OCI-LY7 (cell line): ENCODE measurements at regions of chr3 and their contacts with region 1.

Region 1: DNA sequence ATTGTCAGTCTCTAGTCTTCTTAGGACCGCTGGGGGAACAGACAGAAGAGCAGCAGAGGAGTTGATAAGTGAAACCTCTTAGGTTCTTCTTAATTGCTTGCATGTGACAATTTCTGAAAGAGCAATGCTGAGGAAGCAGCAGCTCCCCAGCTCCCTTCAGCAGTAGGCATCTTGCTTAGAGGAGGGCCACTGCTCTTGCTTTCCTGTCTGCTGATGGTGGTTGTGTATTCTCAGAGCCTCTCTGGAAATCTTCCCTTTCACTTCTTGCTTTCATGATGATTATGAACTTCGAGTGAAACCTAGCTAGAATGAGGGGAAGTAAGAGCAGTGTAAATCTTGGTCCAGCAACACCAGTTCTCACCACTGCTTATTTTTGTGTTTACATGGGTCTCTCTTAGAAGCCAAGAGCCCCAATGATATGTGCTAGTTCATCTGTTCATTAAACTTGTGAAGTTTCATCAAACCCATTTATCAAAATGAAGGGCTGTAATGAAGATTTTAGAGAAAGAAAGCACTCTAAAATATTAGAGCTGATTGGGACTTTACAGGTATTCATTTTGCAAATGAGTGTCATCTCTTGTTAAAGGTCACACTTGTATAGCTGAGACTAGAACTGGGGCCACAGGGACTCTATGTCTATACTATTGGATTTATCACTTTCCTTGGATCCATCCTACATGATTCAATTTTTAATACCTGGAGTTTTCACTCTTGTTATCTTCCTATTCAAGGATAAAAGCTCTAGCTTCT is 246.7 kb downstream of the LPP start:
- DNase-seq: peak; percentile 78
- H3K4me3 ChIP-seq: no peak overlapping the region
- H3K27ac ChIP-seq: peak overlapping the region; percentile 48
- H3K4me1 ChIP-seq: peaks cover 46% of the 10 kb centered on the region
- CTCF ChIP-seq: no peak

Region 2: GRCh38 chr3:188389711-188390342 is 10.8 kb before region 1 on chr3:
- CTCF ChIA-PET with region 1: no interaction called
- POLR2A ChIA-PET with region 1: interaction called, 21 read pairs
- intact Hi-C with region 1: no loop called
- DNase-seq: peak; percentile 92
- H3K4me3 ChIP-seq: peak overlapping the region; percentile 53
- H3K27ac ChIP-seq: peak overlapping the region; percentile 89
- H3K4me1 ChIP-seq: peaks cover 50% of the 10 kb centered on the region
- CTCF ChIP-seq: no peak

Region 3: GRCh38 chr3:188421836-188422540 is 21.3 kb after region 1 on chr3:
- CTCF ChIA-PET with region 1: interaction called, 3 read pairs
- POLR2A ChIA-PET with region 1: interaction called, 14 read pairs
- intact Hi-C with region 1: loop called (anchors 2 kb)
- DNase-seq: peak; percentile 94
- H3K4me3 ChIP-seq: peak overlapping the region; percentile 53
- H3K27ac ChIP-seq: peak overlapping the region; percentile 88
- H3K4me1 ChIP-seq: peaks cover 52% of the 10 kb centered on the region
- CTCF ChIP-seq: no peak

Region 4: GRCh38 chr3:188507244-188507720 is 106.6 kb after region 1 on chr3:
- CTCF ChIA-PET with region 1: no interaction called
- POLR2A ChIA-PET with region 1: no interaction called
- intact Hi-C with region 1: no loop called
- DNase-seq: peak; percentile 13
- H3K4me3 ChIP-seq: no peak overlapping the region
- H3K27ac ChIP-seq: no peak overlapping the region
- H3K4me1 ChIP-seq: peaks cover 8% of the 10 kb centered on the region
- CTCF ChIP-seq: no peak

Region 5: GRCh38 chr3:188807006-188807405 is 406.3 kb after region 1 on chr3:
- CTCF ChIA-PET with region 1: no interaction called
- POLR2A ChIA-PET with region 1: no interaction called
- intact Hi-C with region 1: no loop called
- DNase-seq: peak; percentile 28
- H3K4me3 ChIP-seq: no peak overlapping the region
- H3K27ac ChIP-seq: no peak overlapping the region
- H3K4me1 ChIP-seq: no peaks in the 10 kb centered on the region
- CTCF ChIP-seq: no peak